Common myeloid progenitor, CD34-positive (primary cell): ENCODE measurements at regions of chr16 and their contacts with region 1.

Region 1: GRCh38 chr16:16073891-16074881 is 124.8 kb downstream of the ABCC1 start:
- DNase-seq: peak; percentile 65 to 91 (median 84)
- H3K4me3 ChIP-seq: peak overlapping the region in 2 of 7 experiments; percentile 17 to 30
- H3K27ac ChIP-seq: peak overlapping the region; percentile 79 to 84
- H3K4me1 ChIP-seq: peaks cover 14 to 81% (median 67%) of the 10 kb centered on the region in 4 experiments
- H3K27me3 ChIP-seq: no peaks in the 10 kb centered on the region

Region 2: DNA sequence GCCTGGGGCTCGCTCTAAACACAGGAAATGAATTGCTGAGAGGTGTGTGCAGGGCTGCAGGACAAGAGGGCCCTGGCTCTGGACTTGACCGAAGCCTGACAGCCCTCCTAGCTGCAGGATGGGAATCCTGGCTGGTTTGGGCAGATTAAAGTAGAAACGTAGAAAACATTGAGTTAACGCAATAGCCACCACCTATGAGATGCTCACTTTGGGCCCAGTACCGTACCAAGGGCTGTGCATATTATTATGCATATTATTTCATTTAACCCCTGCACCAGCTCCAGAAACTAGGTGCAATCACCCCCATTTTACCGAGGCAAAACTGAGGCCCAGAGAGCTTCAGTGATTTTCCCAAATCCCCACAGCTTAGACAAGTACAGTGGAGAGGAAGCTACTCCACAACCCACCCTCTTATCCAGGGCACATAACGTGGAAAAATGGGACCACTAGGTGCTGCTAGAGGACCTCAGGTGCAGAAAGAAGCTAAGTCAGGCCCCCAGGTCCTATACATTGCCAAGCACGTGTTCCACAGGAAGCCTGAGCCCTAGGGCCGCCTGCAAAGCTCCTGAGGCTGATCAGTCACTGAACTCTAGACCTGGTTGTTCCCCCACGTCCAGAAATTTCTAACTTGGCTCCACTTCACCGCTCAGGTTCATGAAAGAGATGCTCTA is 296.5 kb before region 1 on chr16:
- CTCF ChIA-PET with region 1: no interaction called
- POLR2A ChIA-PET with region 1: no interaction called
- DNase-seq: peak; percentile 76 to 83 (median 82)
- H3K4me3 ChIP-seq: no peak overlapping the region
- H3K27ac ChIP-seq: no peak overlapping the region
- H3K4me1 ChIP-seq: peaks cover 0 to 3% (median 0%) of the 10 kb centered on the region in 4 experiments
- H3K27me3 ChIP-seq: no peaks in the 10 kb centered on the region

Region 3: GRCh38 chr16:16109453-16110108 is 35.4 kb after region 1 on chr16:
- CTCF ChIA-PET with region 1: interaction called, 11 read pairs
- POLR2A ChIA-PET with region 1: interaction called, 3 read pairs
- DNase-seq: peak in 2 of 3 donors; percentile 47 to 51
- H3K4me3 ChIP-seq: no peak overlapping the region
- H3K27ac ChIP-seq: peak overlapping the region in 1 of 2 experiments; percentile 71
- H3K4me1 ChIP-seq: peaks cover 0 to 12% (median 2%) of the 10 kb centered on the region in 4 experiments
- H3K27me3 ChIP-seq: no peaks in the 10 kb centered on the region

Region 4: GRCh38 chr16:16120382-16121184 is 46.4 kb after region 1 on chr16:
- CTCF ChIA-PET with region 1: interaction called, 86 read pairs
- POLR2A ChIA-PET with region 1: interaction called, 17 read pairs
- DNase-seq: peak; percentile 95 to 99 (median 97)
- H3K4me3 ChIP-seq: peak overlapping the region in 6 of 7 experiments; percentile 25 to 61 (median 52)
- H3K27ac ChIP-seq: peak overlapping the region; percentile 98 to 99
- H3K4me1 ChIP-seq: peaks cover 3 to 40% (median 29%) of the 10 kb centered on the region in 4 experiments
- H3K27me3 ChIP-seq: no peaks in the 10 kb centered on the region